Ovary (tissue), 10 donors: ENCODE measurements at regions of chrX and their contacts with region 1.

Region 1: DNA sequence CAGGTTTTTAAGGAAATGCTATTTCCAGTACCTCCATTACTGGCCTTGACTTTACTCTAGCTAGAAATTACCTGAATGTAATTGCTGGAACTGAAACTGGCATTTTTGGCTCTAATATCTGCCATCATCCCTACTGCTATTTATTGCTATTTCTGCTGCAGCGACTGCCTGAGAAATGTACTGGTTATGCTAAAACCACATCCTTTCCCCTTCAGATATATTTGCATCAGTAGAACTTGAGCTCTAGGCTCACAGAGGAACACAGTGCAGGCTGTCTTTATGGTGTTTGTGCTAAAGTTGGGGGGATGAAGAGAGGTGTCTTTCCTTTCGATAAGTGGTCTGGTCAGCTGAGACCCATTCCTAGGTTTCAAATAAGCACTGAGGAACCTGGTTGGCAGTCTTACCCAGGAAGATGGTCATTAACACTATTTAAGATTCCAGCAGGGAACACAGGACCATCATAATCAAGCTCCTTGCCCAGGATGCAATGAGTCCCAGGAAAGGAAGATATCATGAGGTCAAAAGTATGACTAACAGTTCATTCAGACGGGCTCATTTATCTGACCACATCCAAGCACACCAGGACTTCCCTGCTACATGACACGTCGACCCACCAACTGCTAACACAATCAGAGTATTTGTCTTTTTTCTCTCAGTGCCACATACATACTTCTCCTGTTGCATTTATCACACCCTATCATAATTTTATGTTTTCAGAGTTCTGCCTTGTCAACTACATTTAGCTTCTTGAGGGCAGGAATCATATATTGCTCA is 137.4 kb downstream of the GABRA3 start:
- DNase-seq: no peak
- H3K4me3 ChIP-seq: no peak overlapping the region
- H3K27ac ChIP-seq: no peak overlapping the region
- H3K4me1 ChIP-seq: no peaks in the 10 kb centered on the region
- H3K27me3 ChIP-seq: no peaks in the 10 kb centered on the region
- CTCF ChIP-seq: no peak
- EP300 ChIP-seq: no peak
- POLR2A ChIP-seq: no peak

Region 2: GRCh38 chrX:150854856-150855255 is 1458.9 kb before region 1 on chrX:
- intact Hi-C with region 1: loop called in 1 of 4 experiments (anchors 5 kb)
- DNase-seq: no peak
- H3K4me3 ChIP-seq: no peak overlapping the region
- H3K27ac ChIP-seq: no peak overlapping the region
- H3K4me1 ChIP-seq: no peaks in the 10 kb centered on the region
- H3K27me3 ChIP-seq: no peaks in the 10 kb centered on the region
- CTCF ChIP-seq: no peak
- EP300 ChIP-seq: no peak
- POLR2A ChIP-seq: no peak

Region 3: DNA sequence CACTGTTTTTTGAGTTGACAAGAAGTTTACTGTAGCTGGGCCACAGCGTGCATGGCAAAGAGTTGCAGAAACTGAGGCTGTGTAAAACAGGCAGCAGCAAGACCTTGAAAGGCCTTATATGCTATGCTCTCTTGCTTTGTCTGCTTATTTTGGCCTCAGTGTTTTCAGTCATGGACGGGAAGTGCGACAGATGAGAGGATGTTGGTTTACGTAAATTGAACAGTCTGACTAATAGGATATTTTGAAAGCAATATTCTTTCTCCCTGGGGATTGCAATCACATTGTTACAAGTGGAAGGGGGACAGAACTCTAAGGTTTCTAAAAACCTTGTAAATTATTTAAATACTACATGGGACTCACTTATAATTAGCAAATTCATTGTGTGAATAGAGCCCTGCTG is 143.1 kb before region 1 on chrX:
- intact Hi-C with region 1: no loop called
- DNase-seq: no peak
- H3K4me3 ChIP-seq: no peak overlapping the region
- H3K27ac ChIP-seq: no peak overlapping the region
- H3K4me1 ChIP-seq: no peaks in the 10 kb centered on the region
- H3K27me3 ChIP-seq: no peaks in the 10 kb centered on the region
- CTCF ChIP-seq: no peak
- EP300 ChIP-seq: no peak
- POLR2A ChIP-seq: no peak

Region 4: GRCh38 chrX:152245243-152245642 is 68.5 kb before region 1 on chrX:
- intact Hi-C with region 1: no loop called
- DNase-seq: no peak
- H3K4me3 ChIP-seq: no peak overlapping the region
- H3K27ac ChIP-seq: no peak overlapping the region
- H3K4me1 ChIP-seq: no peaks in the 10 kb centered on the region
- H3K27me3 ChIP-seq: no peaks in the 10 kb centered on the region
- CTCF ChIP-seq: no peak
- EP300 ChIP-seq: no peak
- POLR2A ChIP-seq: no peak

Region 5: GRCh38 chrX:152399395-152399794 is 85.7 kb after region 1 on chrX:
- intact Hi-C with region 1: no loop called
- DNase-seq: no peak
- H3K4me3 ChIP-seq: no peak overlapping the region
- H3K27ac ChIP-seq: no peak overlapping the region
- H3K4me1 ChIP-seq: no peaks in the 10 kb centered on the region
- H3K27me3 ChIP-seq: no peaks in the 10 kb centered on the region
- CTCF ChIP-seq: no peak
- EP300 ChIP-seq: no peak
- POLR2A ChIP-seq: no peak

Region 6: DNA sequence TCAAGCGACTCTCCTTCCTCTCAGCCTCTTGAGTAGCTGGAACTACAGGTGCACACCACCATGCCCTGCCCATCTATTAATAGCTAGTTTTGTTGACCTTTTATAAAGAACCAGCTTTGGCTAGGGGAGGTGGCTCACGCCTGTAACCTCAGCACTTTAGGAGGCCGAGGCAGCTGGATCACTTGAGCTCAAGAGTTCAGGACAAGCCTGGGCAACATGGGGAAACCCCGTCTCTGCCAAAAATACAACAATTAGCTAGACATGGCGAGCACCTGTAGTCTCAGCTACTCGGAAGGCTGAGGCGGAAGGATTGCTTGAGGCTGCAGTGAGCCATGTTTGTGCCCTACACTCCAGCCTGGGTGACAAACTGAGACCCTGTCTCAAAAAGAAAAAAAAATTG is 1984.6 kb after region 1 on chrX:
- intact Hi-C with region 1: no loop called
- DNase-seq: no peak
- H3K4me3 ChIP-seq: no peak overlapping the region
- H3K27ac ChIP-seq: no peak overlapping the region
- H3K4me1 ChIP-seq: no peaks in the 10 kb centered on the region
- H3K27me3 ChIP-seq: no peaks in the 10 kb centered on the region
- CTCF ChIP-seq: no peak
- EP300 ChIP-seq: no peak
- POLR2A ChIP-seq: no peak